ENCODE measurements at regions of chr7 and their contacts with region 1.

Region 1: DNA sequence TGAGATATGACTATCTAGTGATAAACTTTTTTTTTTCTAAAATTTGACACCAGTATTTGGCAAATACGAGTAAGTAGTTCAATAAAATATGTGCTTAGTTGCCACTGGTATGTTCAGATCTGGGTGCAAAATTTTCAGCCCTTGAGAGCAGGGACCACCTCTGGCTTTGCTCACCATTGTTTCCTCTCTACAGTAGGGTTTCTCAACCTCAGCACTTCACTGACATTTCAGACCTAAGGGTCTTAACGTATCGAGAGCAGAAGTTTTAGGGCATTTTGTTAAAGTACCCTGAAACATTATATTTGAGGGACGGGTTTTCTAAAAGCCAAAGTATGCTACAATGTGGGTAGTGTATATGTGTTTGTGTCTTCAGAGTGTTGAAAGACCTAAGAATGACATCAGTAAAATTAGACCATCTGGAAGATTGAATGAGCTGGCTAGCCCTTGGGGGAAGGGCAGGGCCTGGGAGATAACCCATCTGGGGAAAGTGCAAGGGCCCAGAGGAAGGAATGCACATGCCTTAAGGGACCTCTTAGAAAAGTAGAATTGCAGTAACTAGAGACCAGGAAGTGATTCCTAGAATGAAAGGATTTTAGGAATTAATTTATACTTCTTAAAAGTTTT is 11.8 kb downstream of the BZW2 start:
- DNase-seq: no peak
- ATAC-seq: no peak
- H3K4me3 ChIP-seq: no peak overlapping the region
- H3K4me3 Mint-ChIP-seq: peak overlapping the region in 2 of 10 donors; percentile 1 to 56
- H3K27ac ChIP-seq: no peak overlapping the region
- H3K27ac Mint-ChIP-seq: no peak overlapping the region
- H3K4me1 ChIP-seq: no peaks in the 10 kb centered on the region
- H3K4me1 Mint-ChIP-seq: peaks cover 21 to 68% (median 53%) of the 10 kb centered on the region in 7 donors
- H3K27me3 ChIP-seq: no peaks in the 10 kb centered on the region
- H3K27me3 Mint-ChIP-seq: no peaks in the 10 kb centered on the region

Region 2: GRCh38 chr7:16189026-16189715 is 468.6 kb before region 1 on chr7:
- CTCF ChIA-PET with region 1: no interaction called
- POLR2A ChIA-PET with region 1: no interaction called
- intact Hi-C with region 1: no loop called
- DNase-seq: no peak
- ATAC-seq: no peak
- H3K4me3 ChIP-seq: no peak overlapping the region
- H3K4me3 Mint-ChIP-seq: no peak overlapping the region
- H3K27ac ChIP-seq: no peak overlapping the region
- H3K27ac Mint-ChIP-seq: no peak overlapping the region
- H3K4me1 ChIP-seq: no peaks in the 10 kb centered on the region
- H3K4me1 Mint-ChIP-seq: no peaks in the 10 kb centered on the region
- H3K27me3 ChIP-seq: no peaks in the 10 kb centered on the region
- H3K27me3 Mint-ChIP-seq: no peaks in the 10 kb centered on the region

Region 3: GRCh38 chr7:16676579-16676978 is 18.8 kb after region 1 on chr7:
- CTCF ChIA-PET with region 1: no interaction called
- POLR2A ChIA-PET with region 1: no interaction called
- intact Hi-C with region 1: loop called in 1 of 2 experiments (anchors 2 kb)
- DNase-seq: no peak
- ATAC-seq: no peak
- H3K4me3 ChIP-seq: no peak overlapping the region
- H3K4me3 Mint-ChIP-seq: no peak overlapping the region
- H3K27ac ChIP-seq: no peak overlapping the region
- H3K27ac Mint-ChIP-seq: no peak overlapping the region
- H3K4me1 ChIP-seq: no peaks in the 10 kb centered on the region
- H3K4me1 Mint-ChIP-seq: peaks cover 0 to 7% (median 5%) of the 10 kb centered on the region in 7 donors
- H3K27me3 ChIP-seq: no peaks in the 10 kb centered on the region
- H3K27me3 Mint-ChIP-seq: no peaks in the 10 kb centered on the region

Measured in naive thymus-derived CD4-positive, alpha-beta T cell (primary cell).